Lower lobe of right lung (tissue), 2 donors: ENCODE measurements at regions of chr5 and their contacts with region 1.

Region 1: GRCh38 chr5:151115274-151115905 is 34.6 kb upstream of the TNIP1 start:
- DNase-seq: peak; percentile 82
- ATAC-seq: peak; percentile 79 to 88
- H3K4me3 ChIP-seq: no peak overlapping the region
- H3K27ac ChIP-seq: no peak overlapping the region
- H3K4me1 ChIP-seq: peaks cover 14% of the 10 kb centered on the region
- H3K27me3 ChIP-seq: no peaks in the 10 kb centered on the region
- CTCF ChIP-seq: peak; percentile 95

Region 2: DNA sequence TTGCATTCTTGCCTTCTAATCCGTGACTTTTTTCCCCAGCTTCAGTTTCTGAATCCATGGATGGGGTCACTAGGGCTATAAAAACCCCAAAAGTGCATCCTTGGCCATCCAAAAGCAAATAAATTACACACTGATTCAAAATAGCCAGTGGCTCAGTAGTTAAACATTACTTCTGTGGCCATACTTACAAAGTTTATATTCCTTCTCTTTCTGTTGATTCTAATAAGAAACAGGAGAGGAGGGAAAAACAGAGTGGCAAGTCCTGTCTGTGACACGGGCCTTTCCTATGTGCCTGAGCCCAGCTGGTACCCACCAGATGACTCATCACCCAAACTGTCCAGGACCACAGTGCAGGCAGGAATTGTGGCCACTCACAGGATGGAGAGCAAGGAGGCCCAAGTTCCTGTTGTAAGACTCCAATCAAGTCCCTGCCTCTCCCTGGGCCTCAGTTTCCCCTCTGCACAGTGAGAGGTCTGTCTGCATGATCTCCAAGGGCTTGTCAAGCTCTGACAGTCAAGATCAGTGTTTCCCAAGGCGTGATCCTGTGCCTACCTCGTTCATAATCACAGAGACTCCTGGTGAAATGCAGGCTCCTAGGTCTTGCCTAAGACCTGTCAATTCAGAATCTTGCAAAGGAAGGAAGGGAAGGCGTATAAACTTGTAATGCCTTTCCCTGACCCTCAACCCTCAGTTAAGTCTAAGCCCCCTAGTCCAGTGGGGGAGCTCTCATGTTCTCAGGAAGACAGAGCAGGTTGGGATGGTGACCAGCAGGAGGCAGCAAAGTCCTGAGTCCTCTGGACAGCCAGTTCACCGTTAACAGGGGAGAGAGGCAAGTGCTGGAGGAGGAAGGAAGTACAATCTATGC is 64.1 kb before region 1 on chr5:
- intact Hi-C with region 1: loop called (anchors 5 kb)
- DNase-seq: peak; percentile 86
- ATAC-seq: peak; percentile 86 to 89
- H3K4me3 ChIP-seq: no peak overlapping the region
- H3K27ac ChIP-seq: peak overlapping the region; percentile 28
- H3K4me1 ChIP-seq: peaks cover 32% of the 10 kb centered on the region
- H3K27me3 ChIP-seq: no peaks in the 10 kb centered on the region
- CTCF ChIP-seq: peak; percentile 87

Region 3: DNA sequence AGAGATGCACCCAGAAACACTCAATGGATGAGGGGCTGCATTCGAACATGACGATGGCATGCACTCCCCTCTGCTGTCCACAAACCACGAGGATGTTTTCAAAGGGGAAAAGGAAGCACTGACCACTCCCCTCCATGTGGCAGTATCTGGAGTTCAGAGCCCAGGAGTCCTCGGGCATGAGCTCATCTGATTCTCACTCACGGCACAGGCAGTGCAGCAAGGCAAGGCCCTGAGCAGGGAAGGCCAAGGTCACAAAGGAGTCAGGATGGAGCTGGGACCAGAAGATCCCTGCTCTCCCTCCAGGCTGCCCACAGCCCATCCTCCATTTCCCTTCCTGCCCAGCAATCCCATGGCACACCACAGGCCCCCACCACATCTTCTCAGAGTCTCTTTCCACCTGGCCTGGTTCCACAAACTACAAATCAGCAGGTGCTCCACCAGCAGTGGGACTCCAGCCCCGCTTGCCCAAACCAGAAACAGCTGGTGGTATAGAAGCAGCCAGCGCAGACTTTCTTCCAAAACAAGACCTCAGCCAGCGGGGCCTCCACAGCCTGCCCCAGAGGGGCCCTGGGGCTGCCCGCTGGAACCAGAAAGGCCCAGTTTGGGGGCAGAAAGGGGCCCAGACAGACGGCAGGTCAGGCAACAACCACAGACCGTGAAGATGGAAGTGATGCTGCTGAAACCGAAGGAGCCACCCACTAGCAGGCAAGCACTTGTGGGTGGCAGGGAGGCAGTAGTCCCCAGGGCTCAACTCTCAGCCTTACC is 46.8 kb before region 1 on chr5:
- intact Hi-C with region 1: no loop called
- DNase-seq: no peak
- ATAC-seq: no peak
- H3K4me3 ChIP-seq: no peak overlapping the region
- H3K27ac ChIP-seq: peak overlapping the region; percentile 53
- H3K4me1 ChIP-seq: peaks cover 77% of the 10 kb centered on the region
- H3K27me3 ChIP-seq: no peaks in the 10 kb centered on the region
- CTCF ChIP-seq: no peak

Region 4: DNA sequence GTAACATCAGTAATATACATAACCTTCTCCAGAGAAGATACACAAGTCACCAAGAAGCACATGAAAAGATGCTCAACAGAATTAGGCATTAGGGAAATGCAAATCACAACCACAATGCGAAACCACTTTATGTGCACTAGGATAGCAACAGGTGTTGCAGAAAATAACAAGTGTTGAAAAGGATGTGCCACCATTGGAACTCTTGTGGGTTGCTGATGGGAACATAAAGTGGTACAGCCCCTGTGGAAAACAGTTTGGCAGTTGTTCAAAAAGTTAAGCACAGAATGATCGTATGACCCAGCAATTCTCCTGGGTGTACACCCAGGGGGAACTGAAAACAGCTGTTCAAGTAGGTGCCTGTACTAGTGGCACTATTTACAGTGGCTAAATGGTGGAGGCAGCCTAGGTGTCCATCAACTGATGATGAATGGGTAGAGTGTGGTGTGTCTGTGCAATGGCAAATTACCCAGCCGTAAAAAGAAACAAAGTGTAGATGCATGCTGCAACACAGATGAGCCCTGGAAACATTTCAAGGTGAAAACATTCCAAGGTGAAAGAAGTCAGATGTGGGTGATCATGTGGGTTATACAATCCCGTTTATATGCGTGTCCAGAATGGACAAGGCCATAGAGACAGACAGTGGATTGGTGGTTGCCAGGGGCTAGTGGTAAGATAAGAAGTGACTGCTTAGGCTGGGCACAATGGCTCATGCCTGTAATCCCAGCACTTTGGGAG is 81.3 kb after region 1 on chr5:
- intact Hi-C with region 1: no loop called
- DNase-seq: no peak
- ATAC-seq: peak; percentile 19 to 56
- H3K4me3 ChIP-seq: no peak overlapping the region
- H3K27ac ChIP-seq: peak overlapping the region; percentile 41
- H3K4me1 ChIP-seq: peaks cover 17% of the 10 kb centered on the region
- H3K27me3 ChIP-seq: no peaks in the 10 kb centered on the region
- CTCF ChIP-seq: no peak